ENCODE measurements at regions of chr5 and their contacts with region 1.

Region 1: GRCh38 chr5:179907570-179908324 is at the start of gene TBC1D9B:
- DNase-seq: peak; percentile 65 to 76 (median 70)
- ATAC-seq: peak; percentile 92
- H3K4me3 ChIP-seq: peak within 1 kb of the TSS; percentile 36 to 52
- H3K27ac ChIP-seq: peak within 1 kb of the TSS; percentile 30 to 85 (median 64)
- H3K4me1 ChIP-seq: peaks cover 21% of the 10 kb centered on the region
- H3K27me3 ChIP-seq: no peaks in the 10 kb centered on the region
- CTCF ChIP-seq: peak in 6 of 7 experiments; percentile 17 to 88 (median 54)
- POLR2A ChIP-seq: peak in 2 of 3 donors; percentile 22 to 41
- total RNA-seq, gene TBC1D9B: 69.8 to 121 TPM

Region 2: GRCh38 chr5:179806250-179807222 is 101.2 kb before region 1 on chr5 and contains the start of gene MGAT4B:
- intact Hi-C with region 1: loop called (anchors 10 kb)
- DNase-seq: peak; percentile 81 to 85 (median 82)
- ATAC-seq: peak; percentile 87
- H3K4me3 ChIP-seq: peak within 1 kb of the TSS; percentile 72 to 85
- H3K27ac ChIP-seq: peak within 1 kb of the TSS; percentile 85 to 95 (median 91)
- H3K4me1 ChIP-seq: peaks cover 52% of the 10 kb centered on the region
- H3K27me3 ChIP-seq: no peaks in the 10 kb centered on the region
- CTCF ChIP-seq: peak in 1 of 7 experiments; percentile 41
- POLR2A ChIP-seq: peak in 2 of 3 donors; percentile 25 to 41
- total RNA-seq, gene MGAT4B: 89.0 to 90.0 TPM

Region 3: GRCh38 chr5:179818746-179819295 is 88.9 kb before region 1 on chr5:
- intact Hi-C with region 1: no loop called
- DNase-seq: peak; percentile 96 to 99 (median 98)
- ATAC-seq: peak; percentile 75
- H3K4me3 ChIP-seq: no peak overlapping the region
- H3K27ac ChIP-seq: peak overlapping the region; percentile 97 to 100 (median 99)
- H3K4me1 ChIP-seq: peaks cover 52% of the 10 kb centered on the region
- H3K27me3 ChIP-seq: no peaks in the 10 kb centered on the region
- CTCF ChIP-seq: no peak
- POLR2A ChIP-seq: peak; percentile 52 to 78 (median 75)